Panc1 (cell line): ENCODE measurements at regions of chr7 and their contacts with region 1.

Region 1: GRCh38 chr7:142334236-142334635 is 76.4 kb upstream of the PRSS58 start:
- DNase-seq: no peak
- ATAC-seq: no peak
- H3K4me3 ChIP-seq: no peak overlapping the region
- H3K27ac ChIP-seq: no peak overlapping the region
- H3K4me1 ChIP-seq: no peaks in the 10 kb centered on the region
- H3K27me3 ChIP-seq: no peaks in the 10 kb centered on the region; the same call in 1 of the 2 replicates
- CTCF ChIP-seq: no peak

Region 2: GRCh38 chr7:142319970-142320369 is 14.3 kb before region 1 on chr7:
- CTCF ChIA-PET with region 1: interaction called, 10 read pairs
- POLR2A ChIA-PET with region 1: no interaction called
- in situ Hi-C with region 1: no loop called
- intact Hi-C with region 1: no loop called
- DNase-seq: no peak
- ATAC-seq: no peak
- H3K4me3 ChIP-seq: no peak overlapping the region
- H3K27ac ChIP-seq: no peak overlapping the region
- H3K4me1 ChIP-seq: no peaks in the 10 kb centered on the region
- H3K27me3 ChIP-seq: no peaks in the 10 kb centered on the region
- CTCF ChIP-seq: peak; percentile 43

Region 3: GRCh38 chr7:142612237-142612881 is 278.1 kb after region 1 on chr7:
- CTCF ChIA-PET with region 1: no interaction called
- POLR2A ChIA-PET with region 1: no interaction called
- in situ Hi-C with region 1: no loop called
- intact Hi-C with region 1: no loop called
- DNase-seq: no peak
- ATAC-seq: no peak
- H3K4me3 ChIP-seq: no peak overlapping the region
- H3K27ac ChIP-seq: no peak overlapping the region
- H3K4me1 ChIP-seq: no peaks in the 10 kb centered on the region
- H3K27me3 ChIP-seq: peaks cover 6% of the 10 kb centered on the region; the same call in 1 of the 2 replicates
- CTCF ChIP-seq: no peak